CD4-positive, alpha-beta T cell (primary cell): ENCODE measurements at regions of chr17 and their contacts with region 1.

Region 1: DNA sequence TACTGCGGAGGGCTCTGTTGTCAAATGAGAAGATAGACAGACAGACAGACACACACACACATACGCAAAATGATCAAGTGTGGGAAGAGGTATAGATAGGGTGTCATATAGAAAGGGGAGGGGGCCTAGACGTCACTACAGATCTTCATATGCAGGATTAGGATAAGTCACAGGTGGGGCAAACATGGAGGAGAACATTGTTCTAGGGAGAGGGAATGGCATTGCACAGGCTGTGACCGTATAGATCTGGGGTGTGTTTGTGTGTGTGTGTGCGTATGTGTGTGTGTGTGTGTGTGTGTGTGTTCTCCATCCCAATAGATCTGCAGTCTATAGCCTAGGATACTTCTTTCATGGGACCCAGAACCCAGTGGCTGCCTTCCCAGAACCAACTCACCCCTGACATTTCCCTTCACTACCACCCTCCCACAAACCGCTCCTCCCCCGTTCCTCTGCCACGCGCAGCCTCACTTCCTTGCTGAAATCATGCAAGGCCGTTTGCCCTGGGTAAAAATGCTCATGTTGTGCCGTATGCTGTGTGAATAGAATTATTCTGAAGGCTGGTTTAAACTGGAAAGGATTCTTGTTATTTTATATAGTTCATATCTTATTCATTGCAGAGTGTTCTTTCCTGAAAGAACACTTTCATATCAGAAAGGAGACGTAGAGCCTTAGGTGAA is 50.5 kb upstream of the CCL1 start:
- DNase-seq: no peak
- ATAC-seq: no peak
- H3K4me3 ChIP-seq: no peak overlapping the region
- H3K4me3 Mint-ChIP-seq: no peak overlapping the region
- H3K27ac ChIP-seq: no peak overlapping the region
- H3K27ac Mint-ChIP-seq: no peak overlapping the region
- H3K4me1 ChIP-seq: no peaks in the 10 kb centered on the region
- H3K4me1 Mint-ChIP-seq: no peaks in the 10 kb centered on the region
- H3K27me3 ChIP-seq: peaks cover 0 to 3% of the 10 kb centered on the region in 2 experiments
- H3K27me3 Mint-ChIP-seq: peaks cover 21% of the 10 kb centered on the region
- CTCF ChIP-seq: no peak

Region 2: GRCh38 chr17:32915245-32915644 is 1498.3 kb before region 1 on chr17:
- CTCF ChIA-PET with region 1: no interaction called
- POLR2A ChIA-PET with region 1: no interaction called
- intact Hi-C with region 1: loop called in 1 of 2 experiments (anchors 5 kb)
- DNase-seq: no peak
- ATAC-seq: no peak
- H3K4me3 ChIP-seq: no peak overlapping the region
- H3K4me3 Mint-ChIP-seq: no peak overlapping the region
- H3K27ac ChIP-seq: no peak overlapping the region
- H3K27ac Mint-ChIP-seq: no peak overlapping the region
- H3K4me1 ChIP-seq: no peaks in the 10 kb centered on the region
- H3K4me1 Mint-ChIP-seq: no peaks in the 10 kb centered on the region
- H3K27me3 ChIP-seq: no peaks in the 10 kb centered on the region
- H3K27me3 Mint-ChIP-seq: peaks cover 5% of the 10 kb centered on the region
- CTCF ChIP-seq: no peak

Region 3: DNA sequence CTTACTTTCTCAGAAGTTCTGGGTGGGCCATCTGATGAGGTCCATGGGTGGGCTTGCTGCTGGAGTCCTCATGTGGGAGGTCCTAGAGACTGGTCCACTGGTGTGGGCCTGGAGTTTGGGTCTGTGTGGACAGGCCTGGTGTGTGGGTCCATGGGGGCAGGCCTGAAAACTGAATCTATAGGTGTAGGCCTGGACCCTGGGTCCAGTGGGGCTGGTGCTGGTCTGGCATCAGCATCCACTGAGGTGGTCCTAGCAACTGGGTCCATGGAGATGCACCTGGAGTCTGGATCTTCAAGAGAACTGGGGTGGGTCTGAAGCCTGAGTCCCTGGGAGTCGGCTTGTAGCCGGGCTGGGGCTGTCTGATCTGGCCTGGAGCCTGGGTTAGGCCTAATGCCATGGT is 412.3 kb before region 1 on chr17:
- CTCF ChIA-PET with region 1: no interaction called
- POLR2A ChIA-PET with region 1: no interaction called
- intact Hi-C with region 1: no loop called
- DNase-seq: no peak
- ATAC-seq: no peak
- H3K4me3 ChIP-seq: no peak overlapping the region
- H3K4me3 Mint-ChIP-seq: no peak overlapping the region
- H3K27ac ChIP-seq: no peak overlapping the region
- H3K27ac Mint-ChIP-seq: no peak overlapping the region
- H3K4me1 ChIP-seq: no peaks in the 10 kb centered on the region
- H3K4me1 Mint-ChIP-seq: no peaks in the 10 kb centered on the region
- H3K27me3 ChIP-seq: no peaks in the 10 kb centered on the region
- H3K27me3 Mint-ChIP-seq: peaks cover 31% of the 10 kb centered on the region
- CTCF ChIP-seq: no peak

Region 4: GRCh38 chr17:34291721-34292348 is 121.7 kb before region 1 on chr17:
- CTCF ChIA-PET with region 1: no interaction called
- POLR2A ChIA-PET with region 1: no interaction called
- intact Hi-C with region 1: no loop called
- DNase-seq: no peak
- ATAC-seq: no peak
- H3K4me3 ChIP-seq: no peak overlapping the region
- H3K4me3 Mint-ChIP-seq: no peak overlapping the region
- H3K27ac ChIP-seq: no peak overlapping the region
- H3K27ac Mint-ChIP-seq: no peak overlapping the region
- H3K4me1 ChIP-seq: no peaks in the 10 kb centered on the region
- H3K4me1 Mint-ChIP-seq: no peaks in the 10 kb centered on the region
- H3K27me3 ChIP-seq: peaks cover 0 to 2% of the 10 kb centered on the region in 2 experiments
- H3K27me3 Mint-ChIP-seq: peaks cover 32% of the 10 kb centered on the region
- CTCF ChIP-seq: no peak

Region 5: DNA sequence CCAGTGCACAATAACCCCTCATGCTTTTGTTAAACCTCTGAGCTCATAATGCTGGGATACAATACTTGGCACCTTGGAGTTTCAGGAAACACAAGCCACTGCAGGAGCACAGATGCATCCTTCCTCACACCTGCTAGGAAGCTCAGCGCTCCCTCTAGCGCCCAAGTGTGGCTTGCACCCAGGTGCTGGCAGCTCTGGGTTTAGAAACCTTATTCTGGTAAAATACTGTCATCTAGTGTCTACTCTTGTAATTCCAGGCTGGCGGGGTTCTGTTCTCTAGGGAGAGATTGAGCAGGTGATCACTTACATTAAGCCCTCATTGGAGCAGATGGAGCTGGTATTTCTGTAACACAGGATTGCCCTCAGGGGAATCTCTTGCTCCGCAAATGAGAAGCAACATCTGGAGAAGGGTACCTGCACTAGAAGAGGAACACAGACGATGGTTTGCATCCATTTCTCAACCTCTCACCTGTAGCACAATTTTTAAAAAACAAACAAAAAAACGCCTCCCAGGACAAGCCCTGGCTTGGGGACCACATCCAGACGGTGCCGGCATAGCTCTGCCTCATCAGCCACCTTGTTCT is 52.0 kb before region 1 on chr17:
- CTCF ChIA-PET with region 1: no interaction called
- POLR2A ChIA-PET with region 1: no interaction called
- intact Hi-C with region 1: no loop called
- DNase-seq: peak; percentile 7 to 76 (median 42)
- ATAC-seq: peak; percentile 71
- H3K4me3 ChIP-seq: no peak overlapping the region
- H3K4me3 Mint-ChIP-seq: no peak overlapping the region
- H3K27ac ChIP-seq: no peak overlapping the region
- H3K27ac Mint-ChIP-seq: no peak overlapping the region
- H3K4me1 ChIP-seq: no peaks in the 10 kb centered on the region
- H3K4me1 Mint-ChIP-seq: peaks cover 9% of the 10 kb centered on the region
- H3K27me3 ChIP-seq: no peaks in the 10 kb centered on the region
- H3K27me3 Mint-ChIP-seq: peaks cover 5% of the 10 kb centered on the region
- CTCF ChIP-seq: peak; percentile 66

Region 6: DNA sequence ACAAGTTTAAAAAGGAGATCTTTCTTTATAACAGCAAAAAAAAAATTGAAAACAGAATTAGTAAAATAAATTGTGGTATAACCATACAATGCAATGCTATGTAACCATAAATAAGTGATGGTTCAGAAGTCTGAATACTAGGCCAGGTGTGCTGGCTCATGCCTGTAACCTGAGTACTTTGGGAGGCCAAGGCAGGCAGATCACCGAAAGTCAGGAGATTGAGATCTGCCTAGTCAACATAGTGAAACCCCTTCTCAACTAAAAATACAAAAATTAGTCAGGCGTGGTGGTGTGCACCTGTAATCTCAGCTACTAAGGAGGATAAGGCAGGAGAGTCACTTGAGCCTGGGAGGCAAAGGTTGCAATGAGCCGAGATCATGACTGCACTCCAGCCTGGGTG is 513.1 kb after region 1 on chr17:
- CTCF ChIA-PET with region 1: no interaction called
- POLR2A ChIA-PET with region 1: no interaction called
- intact Hi-C with region 1: no loop called
- DNase-seq: no peak
- ATAC-seq: no peak
- H3K4me3 ChIP-seq: no peak overlapping the region
- H3K4me3 Mint-ChIP-seq: no peak overlapping the region
- H3K27ac ChIP-seq: no peak overlapping the region
- H3K27ac Mint-ChIP-seq: no peak overlapping the region
- H3K4me1 ChIP-seq: no peaks in the 10 kb centered on the region
- H3K4me1 Mint-ChIP-seq: no peaks in the 10 kb centered on the region
- H3K27me3 ChIP-seq: no peaks in the 10 kb centered on the region
- H3K27me3 Mint-ChIP-seq: no peaks in the 10 kb centered on the region
- CTCF ChIP-seq: no peak